Transverse colon (tissue), 4 donors: ENCODE measurements at regions of chr17 and their contacts with region 1.

Region 1: GRCh38 chr17:8222630-8223356 is 12.4 kb upstream of the AURKB start:
- DNase-seq: peak; percentile 94
- H3K4me3 ChIP-seq: peak overlapping the region; percentile 46 to 82 (median 52)
- H3K27ac ChIP-seq: peak overlapping the region; percentile 95 to 99 (median 98)
- H3K4me1 ChIP-seq: peaks cover 8 to 40% (median 20%) of the 10 kb centered on the region in 4 donors
- H3K27me3 ChIP-seq: no peaks in the 10 kb centered on the region
- CTCF ChIP-seq: no peak
- EP300 ChIP-seq: no peak
- POLR2A ChIP-seq: peak; percentile 79

Region 2: DNA sequence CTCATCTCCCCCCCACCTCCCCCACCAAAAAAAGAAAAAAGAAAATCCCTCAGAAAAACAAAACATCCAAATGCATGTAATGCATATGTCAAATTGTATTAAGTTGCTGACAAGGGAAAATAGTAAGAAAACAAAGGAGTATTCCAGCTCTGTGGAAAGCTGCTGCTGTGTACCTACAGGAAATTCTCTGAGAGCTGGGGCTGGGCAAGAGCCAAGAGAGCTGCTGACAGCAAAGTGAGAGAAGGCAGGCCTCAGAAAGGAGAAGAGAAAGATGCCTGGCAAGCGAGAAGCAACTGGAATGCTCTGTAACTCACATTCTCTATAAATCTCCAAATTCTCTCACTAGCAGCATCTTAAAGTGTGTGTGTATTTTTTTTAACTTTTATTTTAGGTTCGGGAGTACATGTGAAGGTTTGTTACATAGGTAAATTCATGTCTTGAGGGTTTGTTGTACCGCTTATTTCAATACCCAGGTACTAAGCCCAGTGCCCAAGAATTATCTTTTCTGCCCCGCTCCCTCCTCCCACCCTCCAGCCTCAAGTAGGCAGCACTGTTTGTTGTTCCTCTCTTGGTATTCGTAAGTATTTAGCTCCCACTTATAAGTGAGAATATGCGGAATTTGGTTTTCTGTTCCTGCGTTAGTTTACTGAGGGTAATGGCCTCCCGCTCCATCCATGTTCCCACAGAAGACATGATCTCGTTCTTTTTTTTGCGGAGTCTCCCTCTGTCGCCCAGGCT is 266.4 kb before region 1 on chr17:
- in situ Hi-C with region 1: no loop called
- intact Hi-C with region 1: no loop called
- DNase-seq: peak; percentile 28
- H3K4me3 ChIP-seq: no peak overlapping the region
- H3K27ac ChIP-seq: peak overlapping the region in 3 of 4 donors; percentile 59 to 76 (median 69)
- H3K4me1 ChIP-seq: no peaks in the 10 kb centered on the region
- H3K27me3 ChIP-seq: peaks cover 10% of the 10 kb centered on the region
- CTCF ChIP-seq: no peak
- EP300 ChIP-seq: no peak
- POLR2A ChIP-seq: no peak

Region 3: GRCh38 chr17:8189711-8190477 is 32.9 kb before region 1 on chr17 and contains the start of gene BORCS6:
- in situ Hi-C with region 1: no loop called
- intact Hi-C with region 1: loop called (anchors 2 kb)
- DNase-seq: peak; percentile 98
- H3K4me3 ChIP-seq: peak within 1 kb of the TSS; percentile 66 to 75 (median 72)
- H3K27ac ChIP-seq: peak within 1 kb of the TSS; percentile 95 to 96 (median 96)
- H3K4me1 ChIP-seq: peaks cover 24 to 41% (median 33%) of the 10 kb centered on the region in 4 donors
- H3K27me3 ChIP-seq: no peaks in the 10 kb centered on the region
- CTCF ChIP-seq: peak in 2 of 5 experiments; percentile 9 to 10
- EP300 ChIP-seq: peak; percentile 9
- POLR2A ChIP-seq: peak; percentile 88
- total RNA-seq, gene BORCS6: 3.2 to 17.1 (median 12.7) TPM